Activated CD4-positive, alpha-beta T cell treated with anti-CD3 and anti-CD28 coated beads, Interleukin-2, amount 10 ng/mL, durations not matched to agents 7 days and 5 days (primary cell): ENCODE measurements at regions of chr1 and their contacts with region 1.

Region 1: GRCh38 chr1:27402349-27402754 is 9.9 kb downstream of the GPR3 start:
- DNase-seq: no peak
- H3K4me3 Mint-ChIP-seq: no peak overlapping the region
- H3K27ac Mint-ChIP-seq: no peak overlapping the region
- H3K4me1 Mint-ChIP-seq: peaks cover 17% of the 10 kb centered on the region
- H3K27me3 Mint-ChIP-seq: no peaks in the 10 kb centered on the region

Region 2: GRCh38 chr1:27416387-27417111 is 14.2 kb after region 1 on chr1:
- CTCF ChIA-PET with region 1: interaction called, 28 read pairs
- POLR2A ChIA-PET with region 1: no interaction called
- DNase-seq: peak; percentile 72
- H3K4me3 Mint-ChIP-seq: no peak overlapping the region
- H3K27ac Mint-ChIP-seq: no peak overlapping the region
- H3K4me1 Mint-ChIP-seq: peaks cover 31% of the 10 kb centered on the region
- H3K27me3 Mint-ChIP-seq: no peaks in the 10 kb centered on the region

Region 3: GRCh38 chr1:27436204-27437159 is 34.1 kb after region 1 on chr1:
- CTCF ChIA-PET with region 1: no interaction called
- POLR2A ChIA-PET with region 1: no interaction called
- DNase-seq: peak; percentile 32
- H3K4me3 Mint-ChIP-seq: peak overlapping the region; percentile 55
- H3K27ac Mint-ChIP-seq: peak overlapping the region; percentile 89
- H3K4me1 Mint-ChIP-seq: peaks cover 70% of the 10 kb centered on the region
- H3K27me3 Mint-ChIP-seq: no peaks in the 10 kb centered on the region